Spleen (tissue), 13 donors: ENCODE measurements at regions of chr10 and their contacts with region 1.

Region 1: DNA sequence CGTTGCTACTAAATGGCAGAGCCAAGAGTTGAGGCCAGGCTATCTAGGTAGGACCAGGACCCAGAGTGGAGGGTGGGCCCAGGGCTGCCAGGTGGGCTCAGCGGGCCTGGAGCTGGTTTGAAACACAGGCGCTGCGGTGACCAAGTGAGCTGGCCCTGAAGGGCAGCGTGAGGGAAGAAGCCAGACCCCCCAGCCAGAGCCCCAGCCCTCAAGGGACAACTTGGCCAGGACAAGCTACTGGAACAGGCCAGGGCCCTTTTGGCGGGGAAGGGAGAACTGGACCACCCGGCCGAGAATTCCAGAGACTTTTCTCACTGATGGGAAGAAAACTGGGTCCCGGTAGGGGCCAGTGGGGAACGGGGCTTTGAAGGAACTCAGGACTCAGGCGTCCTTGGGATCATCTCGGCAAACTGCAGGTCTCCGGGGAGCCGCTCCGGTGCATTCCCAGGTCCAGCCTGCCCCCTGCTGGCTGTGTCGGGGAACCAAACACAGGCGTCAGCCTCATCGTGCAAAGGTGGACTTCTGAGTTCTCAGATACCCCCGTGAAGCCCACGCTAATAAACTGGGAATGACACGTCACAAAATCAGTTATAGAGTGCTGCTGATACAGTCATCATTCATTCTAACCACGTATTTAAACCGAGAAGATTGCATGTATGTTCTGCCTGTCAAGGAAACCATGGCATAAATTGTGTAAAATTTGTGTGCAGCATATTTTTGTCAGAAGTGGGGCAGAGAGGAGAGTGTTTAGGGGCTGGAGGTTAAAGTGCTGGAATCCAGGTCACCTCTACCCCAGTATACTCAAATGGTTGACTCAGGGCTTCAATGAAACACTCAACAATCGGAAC is 76.0 kb upstream of the CPXM2 start:
- DNase-seq: peak; percentile 86
- H3K4me3 ChIP-seq: no peak overlapping the region
- H3K27ac ChIP-seq: no peak overlapping the region
- H3K4me1 ChIP-seq: peaks cover 0 to 18% (median 6%) of the 10 kb centered on the region in 6 donors
- H3K27me3 ChIP-seq: peaks cover 0 to 94% (median 26%) of the 10 kb centered on the region in 7 donors
- CTCF ChIP-seq: peak; percentile 36 to 85 (median 76)
- POLR2A ChIP-seq: no peak

Region 2: DNA sequence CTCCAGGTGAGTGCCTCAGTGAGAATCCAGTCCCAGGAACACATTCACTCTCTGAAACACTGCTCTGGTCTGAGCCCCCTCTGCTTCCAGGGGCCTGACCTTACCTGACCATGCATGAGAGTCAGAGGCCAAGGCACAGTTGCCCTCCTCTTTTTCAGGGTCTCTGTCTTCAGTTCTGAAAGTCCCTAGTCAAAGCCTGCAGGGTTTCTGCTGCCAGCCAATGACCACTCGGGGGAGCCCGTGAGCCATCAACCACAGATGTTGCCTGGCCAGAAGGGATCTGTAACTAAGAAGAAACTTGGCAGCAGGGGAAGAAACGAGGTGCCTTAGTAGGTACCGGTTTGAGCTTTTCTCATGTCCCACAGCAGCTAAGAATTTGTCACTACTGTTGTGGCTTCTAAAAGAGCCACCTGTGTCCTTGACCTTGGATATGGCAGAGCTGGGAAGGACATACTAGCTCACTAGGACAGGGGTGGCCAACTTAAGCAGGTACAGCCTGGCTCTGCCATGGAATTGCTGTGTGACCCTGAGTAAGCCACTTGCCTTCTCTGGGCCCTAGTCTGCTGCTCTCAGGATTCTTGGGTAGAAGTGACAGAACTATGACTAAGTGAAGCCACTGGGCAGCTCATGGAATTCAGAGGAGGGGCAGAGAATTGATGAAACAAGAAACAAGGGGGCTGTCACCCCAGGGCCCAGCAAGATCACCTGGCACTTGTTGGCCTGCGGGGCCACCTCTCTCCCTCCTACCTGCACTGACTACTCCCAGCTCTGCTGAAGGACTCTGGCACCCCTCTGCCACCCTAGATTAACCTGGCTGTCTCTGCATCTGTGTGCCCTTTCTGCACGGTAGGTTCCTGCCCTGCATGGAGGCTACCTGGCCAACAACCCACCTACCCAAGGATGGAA is 385.3 kb before region 1 on chr10:
- intact Hi-C with region 1: loop called (anchors 2 kb)
- DNase-seq: peak; percentile 88
- H3K4me3 ChIP-seq: no peak overlapping the region
- H3K27ac ChIP-seq: no peak overlapping the region
- H3K4me1 ChIP-seq: peaks cover 0 to 13% (median 2%) of the 10 kb centered on the region in 6 donors
- H3K27me3 ChIP-seq: peaks cover 0 to 60% (median 16%) of the 10 kb centered on the region in 7 donors
- CTCF ChIP-seq: peak; percentile 48 to 87 (median 78)
- POLR2A ChIP-seq: no peak